B cell (primary cell): ENCODE measurements at regions of chr2 and their contacts with region 1.

Region 1: DNA sequence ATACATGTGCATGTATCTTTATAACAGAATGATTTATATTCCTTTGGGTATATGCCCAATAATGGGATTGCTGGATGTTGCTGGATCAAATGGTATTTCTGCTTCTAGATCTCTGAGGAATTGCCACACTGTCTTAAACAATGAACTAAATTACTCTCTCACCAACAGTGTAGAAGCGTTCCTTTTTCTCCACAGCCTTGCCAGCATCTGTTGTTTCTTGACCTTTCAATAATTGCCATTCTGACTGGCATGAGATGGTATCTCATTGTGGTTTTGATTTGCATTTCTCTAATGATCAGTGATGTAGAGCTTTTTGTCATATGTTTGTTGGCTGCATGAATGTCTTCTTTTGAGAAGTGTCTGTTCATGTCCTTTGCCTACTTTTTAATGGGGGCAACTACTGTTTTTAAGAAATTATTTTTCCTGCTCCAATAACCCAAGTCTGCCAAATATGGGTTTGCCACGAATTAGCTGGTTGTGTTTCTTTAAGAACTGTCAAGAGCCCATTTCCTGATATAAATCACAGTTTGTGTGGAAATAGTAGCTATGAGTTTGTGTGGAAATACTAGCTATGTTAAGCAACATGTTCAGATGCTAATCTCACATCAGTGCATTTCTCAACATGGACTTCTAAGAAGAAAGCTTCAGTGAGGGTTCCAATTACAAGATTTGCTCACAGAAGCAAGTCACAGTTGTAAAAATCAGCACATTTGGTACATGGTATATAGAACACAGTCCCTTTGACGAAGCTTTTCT is 259.4 kb downstream of the ANAPC1 start:
- DNase-seq: no peak
- ATAC-seq: no peak
- H3K4me3 ChIP-seq: no peak overlapping the region
- H3K4me3 Mint-ChIP-seq: peak overlapping the region; percentile 13
- H3K27ac ChIP-seq: no peak overlapping the region
- H3K27ac Mint-ChIP-seq: peak overlapping the region; percentile 7
- H3K4me1 ChIP-seq: no peaks in the 10 kb centered on the region
- H3K4me1 Mint-ChIP-seq: peaks cover 10% of the 10 kb centered on the region
- H3K27me3 ChIP-seq: no peaks in the 10 kb centered on the region
- H3K27me3 Mint-ChIP-seq: peaks cover 7% of the 10 kb centered on the region
- CTCF ChIP-seq: no peak

Region 2: DNA sequence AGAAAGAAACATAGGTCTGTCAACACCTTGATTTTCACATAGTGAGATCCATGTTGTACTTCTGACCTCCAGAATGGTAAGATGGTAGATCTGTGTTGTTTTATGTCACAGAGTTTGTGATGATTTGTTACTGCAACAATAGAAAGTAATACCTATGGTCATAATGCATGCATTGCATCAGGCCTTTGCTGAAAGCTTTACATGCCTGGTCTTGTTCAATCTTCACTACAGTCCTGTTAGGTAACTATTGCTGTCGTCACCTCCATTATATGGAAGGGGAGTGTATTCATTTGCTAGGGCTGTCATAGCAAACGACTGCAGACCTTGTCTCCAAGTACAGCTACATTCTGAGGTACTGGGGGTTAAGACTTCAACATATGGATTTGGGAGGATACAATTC is 15.9 kb after region 1 on chr2:
- CTCF ChIA-PET with region 1: no interaction called
- POLR2A ChIA-PET with region 1: interaction called, 12 read pairs
- intact Hi-C with region 1: no loop called
- DNase-seq: no peak
- ATAC-seq: no peak
- H3K4me3 ChIP-seq: no peak overlapping the region
- H3K4me3 Mint-ChIP-seq: no peak overlapping the region
- H3K27ac ChIP-seq: no peak overlapping the region
- H3K27ac Mint-ChIP-seq: no peak overlapping the region
- H3K4me1 ChIP-seq: no peaks in the 10 kb centered on the region
- H3K4me1 Mint-ChIP-seq: no peaks in the 10 kb centered on the region
- H3K27me3 ChIP-seq: no peaks in the 10 kb centered on the region
- H3K27me3 Mint-ChIP-seq: peaks cover 8% of the 10 kb centered on the region
- CTCF ChIP-seq: no peak